Right ventricle myocardium superior (tissue), 1 donor: ENCODE measurements at regions of chr13 and their contacts with region 1.

Region 1: DNA sequence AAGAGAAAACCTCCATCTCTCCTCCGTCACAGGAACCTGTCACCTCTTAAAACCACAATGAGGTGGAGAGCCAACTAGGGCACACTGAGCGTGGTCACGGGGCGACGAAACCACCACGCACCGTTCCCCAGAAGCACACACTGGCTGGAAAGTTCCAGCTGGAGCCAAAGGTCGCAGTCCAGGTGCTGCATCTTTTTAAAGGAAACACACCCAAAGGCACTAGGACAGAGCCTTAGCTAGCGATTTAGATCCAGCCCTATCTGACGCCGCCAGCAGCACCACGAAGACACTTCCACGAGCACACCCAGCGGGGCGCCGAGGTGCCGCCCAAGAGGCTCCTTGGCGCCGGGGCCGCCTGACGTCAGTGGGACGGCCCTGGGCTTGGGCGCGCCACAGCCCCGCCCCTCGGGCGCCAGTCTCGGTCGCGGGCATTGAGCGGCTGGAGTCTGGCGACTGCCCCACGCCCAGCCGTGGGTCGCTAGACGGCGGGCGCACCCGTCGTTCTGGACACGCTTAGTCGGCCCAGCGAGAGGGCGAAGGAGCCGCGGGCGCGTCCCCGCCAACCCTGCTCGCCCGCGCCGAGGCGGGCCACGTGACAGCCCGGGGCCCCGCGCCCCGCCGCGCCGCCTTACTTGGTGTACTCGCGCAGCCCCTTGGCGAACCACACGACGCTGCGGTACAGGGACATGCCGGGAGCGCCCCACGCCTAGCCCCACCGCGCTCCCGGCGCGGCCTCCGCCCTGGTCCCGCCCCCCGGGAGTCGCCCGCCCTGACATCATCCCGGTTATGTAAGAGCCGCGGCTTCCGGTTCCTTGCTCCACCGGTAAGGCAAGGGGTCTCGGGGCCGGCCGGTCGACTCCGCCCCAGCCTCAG is at the start of gene DHRS12:
- DNase-seq: peak; percentile 95
- ATAC-seq: peak; percentile 89
- total RNA-seq, gene DHRS12: 10.4 TPM

Region 2: DNA sequence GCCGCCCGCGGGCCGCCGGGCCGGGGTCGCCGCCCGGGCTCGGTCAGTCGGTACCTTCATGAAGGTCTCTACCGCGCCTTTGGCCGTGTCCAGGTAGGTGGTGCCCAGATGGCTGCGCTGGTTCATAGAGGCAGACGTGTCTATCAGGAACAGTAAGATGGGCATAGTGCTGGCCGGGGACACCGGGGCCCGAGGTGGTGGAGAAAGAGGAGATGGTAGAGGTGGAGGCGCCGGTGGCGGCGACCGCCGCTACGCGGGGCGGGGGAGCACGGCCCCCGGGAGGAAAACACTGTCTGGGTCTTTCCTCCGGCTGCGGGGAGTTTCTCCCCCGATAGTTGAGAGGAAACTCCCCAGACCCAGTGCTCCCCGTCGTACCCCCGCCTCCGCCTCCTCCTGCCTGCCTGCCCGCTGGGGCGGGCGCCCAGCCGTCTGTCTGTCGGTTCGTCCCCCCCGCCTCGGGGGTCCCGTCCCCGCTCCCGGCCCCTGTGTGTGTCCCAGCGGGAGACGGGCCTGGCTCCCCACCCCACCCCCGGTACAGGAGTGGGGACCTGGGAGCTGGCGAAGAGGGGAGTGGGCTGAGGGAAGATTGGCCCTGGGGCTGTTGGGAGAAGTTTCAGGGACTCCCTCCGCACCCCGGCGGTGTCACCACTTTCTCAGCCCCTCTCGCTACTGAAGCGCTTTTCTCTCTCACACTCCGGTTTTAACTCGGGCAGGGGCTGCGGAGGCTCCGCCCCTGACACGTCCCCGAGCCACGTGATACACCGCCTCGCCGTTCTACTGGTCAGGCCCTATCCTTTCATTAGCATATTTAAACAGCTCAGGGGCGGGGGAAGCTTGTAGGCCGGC is 351.1 kb before region 1 on chr13 and contains the start of gene INTS6:
- intact Hi-C with region 1: loop called (anchors 5 kb)
- DNase-seq: peak; percentile 99
- ATAC-seq: peak; percentile 90
- total RNA-seq, gene INTS6: 28.3 TPM

Region 3: DNA sequence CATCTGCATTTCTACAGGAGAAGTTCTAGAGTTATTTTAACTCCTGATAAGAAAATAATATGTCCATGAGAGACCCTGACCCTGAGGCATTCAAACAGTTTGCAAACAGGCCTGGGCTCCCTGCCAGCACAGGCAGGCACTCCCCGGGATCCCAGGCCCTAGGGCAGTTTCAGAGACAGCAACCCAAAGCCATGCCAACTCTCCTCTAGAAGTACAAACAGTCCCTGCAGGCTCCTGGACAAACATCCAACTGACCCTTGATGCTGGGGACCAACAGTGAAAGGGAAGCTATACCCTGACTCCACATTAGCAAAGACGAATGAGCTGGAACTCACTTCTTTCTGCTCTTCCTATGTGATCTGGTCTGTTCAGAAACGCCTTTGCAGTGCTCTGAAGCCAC is 102.9 kb after region 1 on chr13:
- intact Hi-C with region 1: no loop called
- DNase-seq: no peak
- ATAC-seq: peak; percentile 91